Aorta (tissue), 5 donors: ENCODE measurements at regions of chr22 and their contacts with region 1.

Region 1: DNA sequence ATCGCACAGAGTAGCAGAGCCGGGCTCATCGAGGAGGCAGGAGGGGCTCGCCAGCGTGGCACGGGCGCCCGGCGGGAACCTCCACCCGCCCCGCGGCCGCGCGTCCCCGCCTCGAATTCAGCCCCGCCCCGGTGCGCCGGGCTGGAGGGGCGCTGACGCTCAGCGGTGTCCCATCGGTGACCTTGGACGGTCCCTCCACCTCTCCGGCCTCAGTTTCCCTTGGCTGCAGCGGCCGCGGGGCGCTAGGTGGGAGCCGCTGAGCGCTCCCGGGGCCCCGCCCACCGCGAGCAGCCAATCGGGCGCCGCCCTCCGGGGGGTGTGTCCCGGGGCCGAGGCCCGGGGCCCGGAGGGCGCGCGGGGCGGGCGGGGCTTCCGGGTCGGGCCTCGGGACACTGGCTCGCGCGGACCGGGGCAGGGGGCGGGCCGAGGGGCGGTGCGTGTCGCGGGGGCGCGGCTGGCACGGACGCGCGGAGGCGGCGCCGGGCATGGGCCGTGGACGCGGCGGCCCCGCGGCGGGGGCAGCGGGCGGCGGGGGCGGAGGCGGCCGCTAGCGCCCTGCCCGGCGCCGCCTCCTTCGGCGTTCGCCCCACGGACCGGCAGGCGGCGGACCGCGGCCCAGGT is at the start of gene PPARA:
- DNase-seq: peak; percentile 93 to 98
- ATAC-seq: peak; percentile 93
- H3K4me3 ChIP-seq: peak within 1 kb of the TSS; percentile 57 to 83
- H3K27ac ChIP-seq: peak within 1 kb of the TSS in 1 of 2 donors; percentile 62
- H3K4me1 ChIP-seq: no peaks in the 10 kb centered on the region
- H3K27me3 ChIP-seq: no peaks in the 10 kb centered on the region
- total RNA-seq, gene PPARA: 29.6 to 32.1 TPM

Region 2: DNA sequence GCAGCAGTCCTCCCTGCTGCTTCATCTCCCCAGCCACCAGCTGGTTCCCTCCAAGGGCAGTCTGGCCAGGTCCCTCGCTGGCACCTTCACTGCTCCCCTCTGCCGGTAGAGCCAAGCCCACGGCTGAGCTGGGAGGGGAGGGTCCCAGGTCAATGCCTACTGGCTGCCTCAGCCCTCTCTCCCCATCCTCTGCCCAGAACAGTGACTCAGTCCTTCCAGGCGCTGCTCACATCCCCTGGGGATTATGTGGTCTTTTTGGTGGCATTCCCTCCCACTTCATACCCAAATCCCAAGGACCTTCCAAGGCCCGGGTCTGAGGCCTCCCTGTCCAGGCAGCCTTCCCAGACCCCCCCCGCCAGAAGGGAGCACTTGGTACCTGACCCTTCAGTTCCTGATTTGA is 218.1 kb before region 1 on chr22:
- intact Hi-C with region 1: no loop called
- DNase-seq: no peak
- ATAC-seq: no peak
- H3K4me3 ChIP-seq: no peak overlapping the region
- H3K27ac ChIP-seq: no peak overlapping the region
- H3K4me1 ChIP-seq: no peaks in the 10 kb centered on the region
- H3K27me3 ChIP-seq: no peaks in the 10 kb centered on the region

Region 3: DNA sequence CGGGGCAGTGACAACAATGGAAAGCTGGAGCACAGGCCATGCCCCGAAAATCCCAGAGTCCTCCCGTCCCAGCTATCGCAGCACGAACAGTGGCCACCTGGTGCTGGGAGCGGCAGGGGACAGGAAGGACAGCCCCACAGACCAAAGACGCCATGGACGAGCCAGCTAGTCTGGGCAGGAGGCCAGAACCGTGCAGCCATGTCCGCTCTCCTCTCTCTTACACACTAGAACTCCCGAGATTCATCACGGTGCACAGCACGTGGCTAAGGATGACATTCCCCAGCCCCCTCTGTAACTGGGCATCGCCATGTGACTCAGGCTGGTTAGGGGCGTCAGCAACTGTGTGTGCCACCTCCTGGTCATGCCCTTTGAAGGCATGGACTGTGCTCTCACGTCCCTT is 95.4 kb after region 1 on chr22:
- intact Hi-C with region 1: loop called in 1 of 2 experiments (anchors 10 kb)
- DNase-seq: peak in 1 of 2 donors; percentile 74
- ATAC-seq: peak; percentile 2
- H3K4me3 ChIP-seq: no peak overlapping the region
- H3K27ac ChIP-seq: no peak overlapping the region
- H3K4me1 ChIP-seq: no peaks in the 10 kb centered on the region
- H3K27me3 ChIP-seq: no peaks in the 10 kb centered on the region

Region 4: DNA sequence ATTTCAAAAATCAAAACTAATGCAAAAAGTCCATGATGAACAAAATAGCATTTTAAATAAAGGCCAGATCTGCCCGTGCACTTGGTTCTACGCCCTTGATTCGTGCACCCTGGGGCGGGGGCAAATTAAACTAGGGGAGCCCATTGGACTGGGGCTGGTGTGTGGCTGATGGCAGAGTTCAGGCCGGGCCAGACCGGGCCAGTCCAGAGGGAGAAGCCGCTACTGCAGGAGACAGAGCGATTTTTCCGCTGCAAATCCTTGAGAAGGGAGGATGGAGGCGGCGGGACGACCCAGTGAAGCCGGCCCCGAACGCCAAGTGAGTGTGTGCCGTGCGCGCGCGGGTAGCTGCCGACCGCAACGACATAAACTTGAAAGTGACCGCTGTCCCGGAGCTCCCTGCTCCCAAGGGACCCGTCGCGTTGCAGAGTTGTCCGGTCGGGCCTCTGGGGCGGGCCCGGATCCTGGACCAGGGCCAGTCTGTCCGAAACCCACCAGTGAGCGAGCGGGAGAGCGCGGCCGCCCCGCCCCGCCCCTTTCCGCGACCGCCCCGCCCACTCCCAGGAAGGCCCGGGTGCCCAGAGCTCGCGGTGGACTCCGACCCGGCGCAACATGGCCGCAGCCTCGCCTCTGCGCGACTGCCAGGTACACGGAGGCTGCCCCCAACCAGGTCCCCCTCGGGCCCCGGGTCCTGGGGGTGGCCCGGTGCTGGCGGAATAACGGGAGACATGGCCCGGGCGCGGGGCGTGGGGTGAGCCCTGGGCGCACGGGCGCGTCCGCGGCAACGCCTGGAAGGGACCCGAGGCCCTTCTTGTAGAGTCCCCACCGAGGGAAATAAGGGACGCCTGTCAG is 117.5 kb after region 1 on chr22 and contains the start of gene TTC38:
- intact Hi-C with region 1: loop called in 1 of 2 experiments (anchors 5 kb)
- DNase-seq: peak; percentile 96 to 97
- ATAC-seq: peak; percentile 97
- H3K4me3 ChIP-seq: peak within 1 kb of the TSS; percentile 79 to 84
- H3K27ac ChIP-seq: peak within 1 kb of the TSS; percentile 64 to 72
- H3K4me1 ChIP-seq: no peaks in the 10 kb centered on the region
- H3K27me3 ChIP-seq: no peaks in the 10 kb centered on the region
- total RNA-seq, gene TTC38: 23.3 to 23.9 TPM

Region 5: DNA sequence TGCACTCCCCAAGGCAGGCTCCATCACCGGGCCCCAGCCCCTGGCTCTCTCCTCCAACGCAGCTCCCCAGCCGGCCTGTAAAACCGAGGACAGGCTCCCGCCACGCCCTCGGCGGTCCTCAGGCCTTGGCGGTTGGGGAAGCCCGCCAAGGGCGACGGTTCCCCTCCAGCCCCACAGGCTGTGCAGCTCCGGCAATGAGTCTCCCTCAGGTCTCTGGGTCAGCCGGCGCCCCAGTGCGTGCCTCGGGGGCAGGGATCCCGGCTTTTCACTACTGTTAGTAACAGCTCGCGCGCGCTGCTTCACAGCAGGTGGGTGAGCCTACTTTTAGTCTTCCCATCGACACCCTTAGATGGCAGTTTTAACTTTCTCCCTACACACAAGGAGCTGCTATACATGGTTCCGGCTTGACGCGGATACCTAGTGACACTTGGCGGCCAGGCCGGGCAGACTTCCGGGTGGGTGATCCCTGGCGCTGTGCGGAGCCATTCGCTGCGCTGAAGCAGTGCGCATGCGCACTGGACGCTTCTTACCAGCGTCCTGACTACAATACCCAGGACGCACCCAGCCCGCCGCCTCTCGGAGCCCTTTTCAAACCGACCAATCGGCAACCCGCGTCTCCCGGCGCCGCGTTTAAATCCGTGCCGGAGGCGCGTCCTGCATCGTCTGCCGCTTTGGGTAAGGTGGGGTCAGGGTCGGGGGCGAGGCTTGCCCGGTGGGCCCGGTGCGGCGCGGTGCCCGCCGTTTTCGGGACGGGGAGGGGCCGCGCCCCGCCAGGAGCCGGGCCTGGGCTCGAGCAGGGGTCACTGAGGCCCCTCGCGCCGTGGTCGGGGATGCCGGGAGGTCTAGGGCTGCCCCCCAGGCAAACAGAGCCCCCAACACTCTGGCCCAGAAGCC is 146.4 kb after region 1 on chr22 and contains the start of gene GTSE1:
- intact Hi-C with region 1: loop called in 1 of 2 experiments (anchors 5 kb)
- DNase-seq: peak; percentile 99
- ATAC-seq: peak; percentile 98
- H3K4me3 ChIP-seq: peak within 1 kb of the TSS; percentile 9 to 37
- H3K27ac ChIP-seq: peak within 1 kb of the TSS; percentile 46 to 78
- H3K4me1 ChIP-seq: no peaks in the 10 kb centered on the region
- H3K27me3 ChIP-seq: no peaks in the 10 kb centered on the region
- total RNA-seq, gene GTSE1: 0.55 to 1.5 TPM